GM12878 (cell line): ENCODE measurements at regions of chr2 and their contacts with region 1.

Region 1: GRCh38 chr2:73561422-73561821 is 80.8 kb downstream of the NAT8 start:
- DNase-seq: no peak
- ATAC-seq: no peak
- H3K4me3 ChIP-seq: no peak overlapping the region
- H3K27ac ChIP-seq: no peak overlapping the region
- H3K4me1 ChIP-seq: no peaks in the 10 kb centered on the region
- H3K27me3 ChIP-seq: no peaks in the 10 kb centered on the region
- CTCF ChIP-seq: no peak
- EP300 ChIP-seq: no peak
- POLR2A ChIP-seq: no peak
- RAD21 ChIP-seq: no peak

Region 2: DNA sequence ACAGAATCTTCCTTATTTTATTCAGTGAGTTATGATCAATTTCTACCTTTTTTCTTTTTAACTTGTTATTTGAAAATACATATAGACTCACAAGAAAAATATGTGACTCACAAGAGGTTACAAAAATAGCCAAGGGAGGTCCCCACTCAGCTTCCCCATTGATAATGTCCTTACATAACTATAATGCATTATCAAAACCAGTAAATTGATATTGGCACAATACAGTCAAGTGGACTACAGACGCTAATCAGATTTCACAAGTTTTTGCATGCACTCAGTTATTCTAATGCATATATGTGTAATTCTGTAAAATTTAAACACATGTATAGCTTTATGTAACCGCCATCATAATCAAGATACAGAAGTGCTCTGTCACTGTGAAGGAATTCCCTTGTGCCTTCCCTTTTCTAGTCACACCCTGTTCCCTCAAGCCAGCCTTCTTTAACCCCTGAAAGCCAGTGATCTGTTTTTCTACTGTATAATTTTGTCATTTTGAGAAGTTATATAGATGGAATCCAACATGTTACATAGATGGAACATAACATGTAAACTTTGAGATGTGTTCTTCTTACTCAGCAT is 57.3 kb before region 1 on chr2:
- CTCF ChIA-PET with region 1: no interaction called
- POLR2A ChIA-PET with region 1: no interaction called
- RAD21 ChIA-PET with region 1: no interaction called
- SMC1A ChIA-PET with region 1: no interaction called
- in situ Hi-C with region 1: no loop called
- intact Hi-C with region 1: no loop called
- DNase-seq: no peak
- ATAC-seq: no peak
- H3K4me3 ChIP-seq: no peak overlapping the region
- H3K27ac ChIP-seq: no peak overlapping the region
- H3K4me1 ChIP-seq: no peaks in the 10 kb centered on the region
- H3K27me3 ChIP-seq: no peaks in the 10 kb centered on the region
- CTCF ChIP-seq: no peak
- EP300 ChIP-seq: no peak
- POLR2A ChIP-seq: no peak
- RAD21 ChIP-seq: no peak

Region 3: GRCh38 chr2:73588177-73588576 is 26.8 kb after region 1 on chr2:
- CTCF ChIA-PET with region 1: no interaction called
- POLR2A ChIA-PET with region 1: interaction called, 10 read pairs
- RAD21 ChIA-PET with region 1: no interaction called
- SMC1A ChIA-PET with region 1: no interaction called
- in situ Hi-C with region 1: no loop called
- intact Hi-C with region 1: no loop called
- DNase-seq: no peak
- ATAC-seq: peak; percentile 20; the same call in 1 of the 3 replicates
- H3K4me3 ChIP-seq: no peak overlapping the region
- H3K27ac ChIP-seq: no peak overlapping the region
- H3K4me1 ChIP-seq: no peaks in the 10 kb centered on the region
- H3K27me3 ChIP-seq: no peaks in the 10 kb centered on the region
- CTCF ChIP-seq: no peak
- EP300 ChIP-seq: no peak
- POLR2A ChIP-seq: no peak
- RAD21 ChIP-seq: no peak